ENCODE measurements at regions of chr17 and their contacts with region 1.

Region 1: DNA sequence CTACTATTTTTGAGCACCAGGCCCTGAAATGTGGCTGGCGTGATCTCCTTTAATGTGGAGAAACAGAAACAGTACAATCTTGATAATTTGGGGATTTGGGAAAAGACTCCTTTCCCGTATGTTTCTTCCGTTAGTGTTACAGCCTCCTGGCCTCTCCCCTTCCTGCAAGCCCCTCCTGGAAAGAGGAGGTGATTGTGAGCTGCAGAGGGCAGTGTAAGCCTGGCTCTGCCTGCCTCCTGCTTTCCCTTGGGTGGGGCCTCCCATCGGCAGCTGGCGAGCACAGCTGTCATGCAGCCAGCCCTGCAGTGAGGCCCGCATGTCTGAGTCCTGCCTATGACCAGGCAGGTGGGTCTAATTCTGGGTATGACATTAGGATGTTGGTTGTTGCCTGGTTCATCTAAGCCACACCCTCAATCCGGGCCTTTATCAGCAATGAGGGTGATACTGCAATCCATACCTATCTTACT is 48.7 kb upstream of the WSB1 start:
- DNase-seq: peak; percentile 74 to 94
- H3K4me3 ChIP-seq: peak overlapping the region in 1 of 4 donors; percentile 2
- H3K27ac ChIP-seq: peak overlapping the region; percentile 26 to 90 (median 83)
- H3K4me1 ChIP-seq: peaks cover 25 to 65% (median 45%) of the 10 kb centered on the region in 4 donors
- H3K27me3 ChIP-seq: no peaks in the 10 kb centered on the region
- CTCF ChIP-seq: peak in 5 of 7 experiments; percentile 44 to 73 (median 61)
- EP300 ChIP-seq: peak; percentile 33
- POLR2A ChIP-seq: no peak

Region 2: DNA sequence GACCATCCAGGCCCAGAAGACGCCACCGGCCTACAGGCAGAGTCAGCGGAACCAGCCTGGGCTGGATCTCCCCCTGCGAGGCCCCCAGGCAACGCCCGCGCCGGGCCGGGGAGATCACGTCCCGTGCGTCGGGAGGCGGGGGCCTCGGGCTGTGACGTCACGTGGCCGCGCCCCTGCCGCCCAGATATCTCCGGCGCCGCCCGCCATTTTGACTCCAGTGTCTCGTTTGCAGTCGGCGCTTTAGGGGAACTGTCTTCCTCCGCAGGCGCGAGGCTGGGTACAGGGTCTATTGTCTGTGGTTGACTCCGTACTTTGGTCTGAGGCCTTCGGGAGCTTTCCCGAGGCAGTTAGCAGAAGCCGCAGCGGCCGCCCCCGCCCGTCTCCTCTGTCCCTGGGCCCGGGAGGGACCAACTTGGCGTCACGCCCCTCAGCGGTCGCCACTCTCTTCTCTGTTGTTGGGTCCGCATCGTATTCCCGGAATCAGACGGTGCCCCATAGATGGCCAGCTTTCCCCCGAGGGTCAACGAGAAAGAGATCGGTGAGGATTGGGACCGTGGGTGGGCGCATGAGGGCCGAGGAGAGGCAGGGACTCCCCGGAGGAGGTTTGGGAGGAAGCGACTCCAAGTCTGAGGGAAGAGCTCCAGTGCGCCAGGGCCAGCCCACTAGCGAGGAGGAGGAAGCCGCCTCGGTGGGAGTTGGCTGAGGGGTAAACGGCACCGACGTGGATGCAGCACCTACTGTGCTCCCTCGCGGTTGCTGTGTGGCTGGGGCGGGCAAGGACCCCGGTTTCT is 48.8 kb after region 1 on chr17 and contains the start of gene WSB1:
- intact Hi-C with region 1: loop called (anchors 10 kb)
- DNase-seq: peak; percentile 94 to 98
- H3K4me3 ChIP-seq: peak within 1 kb of the TSS; percentile 63 to 84 (median 68)
- H3K27ac ChIP-seq: peak within 1 kb of the TSS; percentile 96 to 100 (median 99)
- H3K4me1 ChIP-seq: peaks cover 29 to 40% (median 36%) of the 10 kb centered on the region in 4 donors
- H3K27me3 ChIP-seq: no peaks in the 10 kb centered on the region
- CTCF ChIP-seq: no peak
- EP300 ChIP-seq: peak; percentile 58
- POLR2A ChIP-seq: peak in 2 of 4 donors; percentile 95 to 96
- total RNA-seq, gene WSB1: 88.3 to 531 (median 194) TPM

Region 3: DNA sequence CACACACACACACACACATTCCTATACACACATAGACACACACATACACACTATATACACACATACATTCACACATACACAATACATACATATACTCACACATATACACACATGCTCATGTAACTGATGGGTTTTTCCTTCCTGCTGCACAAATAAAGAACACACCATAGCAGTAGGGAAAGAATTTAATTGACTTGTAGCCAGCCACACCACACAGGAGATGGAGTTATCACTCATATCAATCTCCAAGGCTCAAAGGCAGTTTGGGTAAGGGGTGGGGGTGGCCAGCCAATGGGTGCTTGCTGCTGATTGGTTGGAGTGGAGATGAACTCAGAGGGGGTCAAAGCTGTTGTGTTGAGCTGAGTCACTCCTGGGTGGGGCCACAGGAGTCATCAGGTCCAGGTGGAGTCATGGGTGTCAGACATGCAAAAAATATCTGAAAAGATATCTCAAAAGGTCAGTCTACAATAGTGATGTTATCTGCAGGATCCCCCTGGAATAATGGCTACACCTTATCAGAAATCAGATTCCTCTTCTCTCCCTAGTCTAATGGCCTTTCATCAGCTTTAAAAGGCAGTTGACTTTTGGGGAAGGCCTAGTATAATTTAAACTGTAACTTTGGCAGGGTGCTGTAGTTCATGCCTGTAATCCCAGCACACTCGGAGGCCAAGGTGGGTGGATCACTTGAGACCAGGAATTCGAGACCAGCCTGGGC is 94.7 kb after region 1 on chr17:
- intact Hi-C with region 1: loop called (anchors 5 kb)
- DNase-seq: no peak
- H3K4me3 ChIP-seq: no peak overlapping the region
- H3K27ac ChIP-seq: no peak overlapping the region
- H3K4me1 ChIP-seq: peaks cover 0 to 27% (median 5%) of the 10 kb centered on the region in 4 donors
- H3K27me3 ChIP-seq: no peaks in the 10 kb centered on the region
- CTCF ChIP-seq: no peak
- EP300 ChIP-seq: no peak
- POLR2A ChIP-seq: no peak

Region 4: DNA sequence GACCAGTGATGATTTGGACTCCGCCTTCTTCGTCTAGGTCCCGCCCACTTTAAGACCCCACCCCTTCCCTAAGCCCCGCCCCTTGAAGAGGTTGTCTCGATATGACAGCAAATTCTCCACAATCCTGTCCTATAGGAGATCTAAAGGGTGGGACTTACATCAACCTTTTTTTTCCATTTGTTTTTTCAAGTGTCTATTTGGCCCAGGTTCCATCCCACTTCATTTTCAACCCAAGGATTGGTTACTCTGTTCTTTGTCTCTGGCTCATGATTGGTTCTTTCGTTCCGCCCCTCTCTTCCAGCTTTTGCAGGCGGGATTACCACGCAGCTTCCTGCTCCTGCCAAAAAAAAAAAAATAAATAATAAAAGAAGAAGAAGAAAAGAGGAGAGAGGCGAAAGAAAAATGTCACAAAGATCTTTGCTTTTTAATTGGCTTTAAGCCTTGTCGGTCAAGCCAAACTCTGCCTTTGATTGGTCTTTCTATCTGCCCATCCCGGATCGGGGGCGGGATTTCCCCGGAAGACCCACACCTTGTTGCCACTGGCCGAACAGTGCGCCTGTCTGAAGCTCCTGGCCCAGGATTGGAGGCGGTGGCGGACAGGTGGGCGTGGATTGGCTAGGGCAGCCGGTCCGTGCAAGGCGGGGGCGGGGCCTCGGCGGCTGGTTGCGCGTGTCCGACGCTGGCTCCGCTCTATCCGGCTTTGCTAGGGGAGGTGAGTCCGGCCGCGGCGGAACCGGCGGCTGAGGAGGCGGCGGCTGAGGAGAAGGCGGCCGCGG is 796.0 kb after region 1 on chr17:
- intact Hi-C with region 1: no loop called
- DNase-seq: peak; percentile 99 to 100
- H3K4me3 ChIP-seq: peak overlapping the region; percentile 92 to 99 (median 92)
- H3K27ac ChIP-seq: peak overlapping the region; percentile 94 to 97 (median 95)
- H3K4me1 ChIP-seq: peaks cover 27 to 43% (median 37%) of the 10 kb centered on the region in 4 donors
- H3K27me3 ChIP-seq: no peaks in the 10 kb centered on the region
- CTCF ChIP-seq: no peak
- EP300 ChIP-seq: no peak
- POLR2A ChIP-seq: peak in 1 of 4 donors; percentile 7

Measured in stomach (tissue), 19 donors.